ENCODE measurements at regions of chr16 and their contacts with region 1.

Region 1: GRCh38 chr16:69116256-69116875 is 10.9 kb downstream of the HAS3 start:
- DNase-seq: no peak
- H3K4me3 ChIP-seq: no peak overlapping the region
- H3K27ac ChIP-seq: no peak overlapping the region
- H3K4me1 ChIP-seq: no peaks in the 10 kb centered on the region
- H3K27me3 ChIP-seq: no peaks in the 10 kb centered on the region
- CTCF ChIP-seq: no peak

Region 2: GRCh38 chr16:68893710-68894705 is 222.4 kb before region 1 on chr16:
- CTCF ChIA-PET with region 1: no interaction called
- POLR2A ChIA-PET with region 1: interaction called, 23 read pairs
- intact Hi-C with region 1: no loop called
- DNase-seq: no peak
- H3K4me3 ChIP-seq: no peak overlapping the region
- H3K27ac ChIP-seq: no peak overlapping the region
- H3K4me1 ChIP-seq: no peaks in the 10 kb centered on the region
- H3K27me3 ChIP-seq: no peaks in the 10 kb centered on the region
- CTCF ChIP-seq: no peak